AG04450 (cell line): ENCODE measurements at regions of chr15 and their contacts with region 1.

Region 1: GRCh38 chr15:70722266-70723121 is 40.9 kb downstream of the UACA start:
- DNase-seq: peak; percentile 43
- H3K4me3 ChIP-seq: no peak overlapping the region
- H3K27ac ChIP-seq: no peak overlapping the region
- H3K27me3 ChIP-seq: no peaks in the 10 kb centered on the region
- CTCF ChIP-seq: peak; percentile 71

Region 2: GRCh38 chr15:70339681-70340493 is 382.6 kb before region 1 on chr15:
- CTCF ChIA-PET with region 1: no interaction called
- POLR2A ChIA-PET with region 1: no interaction called
- DNase-seq: no peak
- H3K4me3 ChIP-seq: no peak overlapping the region
- H3K27ac ChIP-seq: no peak overlapping the region
- H3K27me3 ChIP-seq: peaks cover 39% of the 10 kb centered on the region
- CTCF ChIP-seq: no peak

Region 3: DNA sequence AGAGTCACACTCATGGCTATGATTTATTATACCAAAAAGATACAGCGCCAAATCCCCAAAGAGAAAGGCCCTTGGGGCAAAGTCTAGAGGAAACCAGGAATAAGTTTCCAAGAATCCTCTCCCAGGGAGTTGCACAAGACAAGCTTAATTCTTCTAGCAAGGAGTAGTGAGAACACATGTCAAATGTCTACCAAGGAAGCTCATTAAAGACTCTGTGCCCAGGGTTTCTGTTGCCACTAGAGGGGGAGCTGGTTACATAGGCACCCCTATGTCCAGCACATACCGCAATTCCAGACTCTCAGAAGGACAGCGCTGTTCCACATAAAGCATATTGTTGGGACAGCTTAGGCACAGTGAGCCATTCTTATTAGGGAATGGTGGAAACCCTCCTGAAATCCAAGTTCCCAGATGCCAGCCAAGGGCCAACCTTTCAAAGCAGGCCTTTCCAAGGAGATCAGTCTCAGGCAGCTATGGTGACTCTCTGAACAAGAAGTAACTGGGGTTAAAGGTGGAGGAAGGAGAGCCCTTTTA is 153.3 kb before region 1 on chr15:
- CTCF ChIA-PET with region 1: interaction called, 13 read pairs
- POLR2A ChIA-PET with region 1: no interaction called
- DNase-seq: peak; percentile 38
- H3K4me3 ChIP-seq: no peak overlapping the region
- H3K27ac ChIP-seq: peak overlapping the region; percentile 35
- H3K27me3 ChIP-seq: peaks cover 6% of the 10 kb centered on the region
- CTCF ChIP-seq: peak; percentile 71

Region 4: GRCh38 chr15:70701891-70702568 is 20.5 kb before region 1 on chr15:
- CTCF ChIA-PET with region 1: interaction called, 19 read pairs
- POLR2A ChIA-PET with region 1: no interaction called
- DNase-seq: no peak
- H3K4me3 ChIP-seq: peak overlapping the region; percentile 47
- H3K27ac ChIP-seq: peak overlapping the region; percentile 63
- H3K27me3 ChIP-seq: no peaks in the 10 kb centered on the region
- CTCF ChIP-seq: no peak

Region 5: GRCh38 chr15:70754862-70755261 is 32.4 kb after region 1 on chr15:
- CTCF ChIA-PET with region 1: interaction called, 12 read pairs
- POLR2A ChIA-PET with region 1: no interaction called
- DNase-seq: no peak
- H3K4me3 ChIP-seq: no peak overlapping the region
- H3K27ac ChIP-seq: no peak overlapping the region
- H3K27me3 ChIP-seq: no peaks in the 10 kb centered on the region
- CTCF ChIP-seq: 0 out of 2 replicates have a peak, but pooled peaks have one; percentile 3

Region 6: DNA sequence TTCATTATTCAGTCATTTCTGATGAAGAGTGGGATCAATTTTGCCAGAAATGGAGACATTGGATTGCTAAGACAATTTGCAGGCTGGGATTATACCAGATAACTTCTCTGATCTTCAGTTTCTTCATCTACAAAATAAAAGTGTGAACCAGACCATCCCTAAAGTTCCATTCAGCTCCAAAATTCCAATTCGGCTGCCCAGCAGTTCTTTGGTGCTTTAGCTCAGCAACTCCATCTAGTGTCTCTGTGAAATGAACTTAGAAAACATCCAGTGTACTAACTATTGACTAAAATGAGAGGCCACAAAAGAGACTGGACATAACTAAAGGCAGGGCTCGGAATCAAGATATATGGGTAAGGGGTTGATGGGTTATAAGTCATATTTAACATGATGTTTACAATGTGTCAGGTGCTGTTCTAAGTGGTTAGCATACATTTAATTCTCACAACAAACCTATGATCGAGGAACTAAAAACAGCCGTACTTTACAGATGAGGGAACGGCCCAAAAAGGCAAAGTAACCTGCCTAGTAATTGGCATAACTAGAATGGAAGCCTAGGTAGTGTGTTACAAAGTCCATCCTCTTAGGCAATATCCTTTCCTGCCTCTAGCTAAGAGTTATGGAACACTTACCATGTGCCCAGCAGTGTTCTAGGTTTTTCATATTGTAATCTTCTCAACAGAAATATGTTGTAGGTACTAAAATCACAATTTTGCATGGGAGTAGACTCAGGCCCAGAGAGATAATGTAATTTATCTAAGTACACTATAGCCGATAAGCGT is 152.7 kb after region 1 on chr15:
- CTCF ChIA-PET with region 1: interaction called, 11 read pairs
- POLR2A ChIA-PET with region 1: no interaction called
- DNase-seq: no peak
- H3K4me3 ChIP-seq: no peak overlapping the region
- H3K27ac ChIP-seq: no peak overlapping the region
- H3K27me3 ChIP-seq: no peaks in the 10 kb centered on the region
- CTCF ChIP-seq: peak; percentile 77